Activated CD4-positive, alpha-beta memory T cell treated with anti-CD3 and anti-CD28 coated beads, Interleukin-2, amount 10 ng/mL, durations not matched to agents 7 days and 5 days (primary cell): ENCODE measurements at regions of chr1 and their contacts with region 1.

Region 1: GRCh38 chr1:165392634-165393571 is 36.4 kb upstream of the LMX1A start:
- DNase-seq: peak; percentile 95
- H3K4me3 Mint-ChIP-seq: peak overlapping the region; percentile 59
- H3K27ac Mint-ChIP-seq: peak overlapping the region; percentile 68
- H3K4me1 Mint-ChIP-seq: peaks cover 26% of the 10 kb centered on the region
- H3K27me3 Mint-ChIP-seq: peaks cover 87% of the 10 kb centered on the region

Region 2: GRCh38 chr1:165330483-165330882 is 62.4 kb before region 1 on chr1:
- CTCF ChIA-PET with region 1: no interaction called
- POLR2A ChIA-PET with region 1: no interaction called
- DNase-seq: no peak
- H3K4me3 Mint-ChIP-seq: no peak overlapping the region
- H3K27ac Mint-ChIP-seq: no peak overlapping the region
- H3K4me1 Mint-ChIP-seq: no peaks in the 10 kb centered on the region
- H3K27me3 Mint-ChIP-seq: peaks cover 14% of the 10 kb centered on the region

Region 3: DNA sequence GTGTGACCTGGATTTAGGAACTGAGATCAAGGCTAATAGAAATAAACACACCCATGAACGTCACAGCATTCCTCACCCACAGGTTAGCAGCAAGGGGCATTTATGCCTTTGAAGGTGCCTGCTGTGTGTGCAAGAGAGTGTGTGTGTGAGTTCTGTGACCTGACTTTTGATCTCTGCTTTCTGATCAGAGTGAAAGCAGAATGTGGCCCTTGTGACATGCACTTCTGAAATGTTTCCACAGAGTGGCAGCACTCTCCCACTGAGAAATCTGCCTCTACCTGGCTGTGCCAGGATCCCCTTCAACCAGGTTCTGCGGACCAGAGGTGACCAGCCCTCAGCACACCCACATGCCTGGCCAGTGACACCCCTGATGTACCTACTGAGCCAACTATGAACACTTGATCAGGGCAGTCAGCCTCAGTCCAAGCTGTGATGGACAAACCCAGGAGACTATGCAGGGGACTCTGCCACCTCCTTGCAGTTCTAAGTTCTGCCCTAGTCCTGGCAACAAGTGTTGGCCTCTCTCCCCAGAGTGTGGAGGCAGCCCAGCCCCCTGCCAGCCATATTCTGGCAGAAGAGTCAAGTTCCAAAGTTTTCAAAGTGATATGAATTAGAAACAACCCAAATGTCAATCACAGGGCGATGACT is 11.1 kb after region 1 on chr1:
- CTCF ChIA-PET with region 1: interaction called, 29 read pairs
- POLR2A ChIA-PET with region 1: no interaction called
- DNase-seq: peak; percentile 51
- H3K4me3 Mint-ChIP-seq: no peak overlapping the region
- H3K27ac Mint-ChIP-seq: no peak overlapping the region
- H3K4me1 Mint-ChIP-seq: no peaks in the 10 kb centered on the region
- H3K27me3 Mint-ChIP-seq: peaks cover 40% of the 10 kb centered on the region

Region 4: DNA sequence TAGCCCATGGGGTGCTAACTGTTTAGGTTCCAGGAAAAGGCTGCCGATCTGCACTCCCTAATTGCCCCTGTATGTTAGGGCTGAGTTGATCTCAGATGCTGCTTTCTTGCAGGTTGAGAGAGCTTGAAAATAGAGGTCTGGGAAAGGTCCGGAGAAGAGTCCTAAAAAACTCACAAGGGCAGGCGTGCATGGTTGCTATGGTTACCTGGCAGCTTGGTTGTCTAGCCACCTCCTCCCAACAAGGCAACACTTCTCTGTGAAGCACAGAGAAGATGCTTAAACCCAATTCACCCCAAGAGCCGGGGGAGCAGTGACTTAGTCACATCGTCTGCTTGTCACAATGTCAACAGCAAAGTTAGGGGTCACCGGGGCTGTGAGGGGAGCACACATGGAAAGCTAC is 119.9 kb after region 1 on chr1:
- CTCF ChIA-PET with region 1: no interaction called
- POLR2A ChIA-PET with region 1: no interaction called
- DNase-seq: no peak
- H3K4me3 Mint-ChIP-seq: no peak overlapping the region
- H3K27ac Mint-ChIP-seq: no peak overlapping the region
- H3K4me1 Mint-ChIP-seq: no peaks in the 10 kb centered on the region
- H3K27me3 Mint-ChIP-seq: peaks cover 23% of the 10 kb centered on the region

Region 5: DNA sequence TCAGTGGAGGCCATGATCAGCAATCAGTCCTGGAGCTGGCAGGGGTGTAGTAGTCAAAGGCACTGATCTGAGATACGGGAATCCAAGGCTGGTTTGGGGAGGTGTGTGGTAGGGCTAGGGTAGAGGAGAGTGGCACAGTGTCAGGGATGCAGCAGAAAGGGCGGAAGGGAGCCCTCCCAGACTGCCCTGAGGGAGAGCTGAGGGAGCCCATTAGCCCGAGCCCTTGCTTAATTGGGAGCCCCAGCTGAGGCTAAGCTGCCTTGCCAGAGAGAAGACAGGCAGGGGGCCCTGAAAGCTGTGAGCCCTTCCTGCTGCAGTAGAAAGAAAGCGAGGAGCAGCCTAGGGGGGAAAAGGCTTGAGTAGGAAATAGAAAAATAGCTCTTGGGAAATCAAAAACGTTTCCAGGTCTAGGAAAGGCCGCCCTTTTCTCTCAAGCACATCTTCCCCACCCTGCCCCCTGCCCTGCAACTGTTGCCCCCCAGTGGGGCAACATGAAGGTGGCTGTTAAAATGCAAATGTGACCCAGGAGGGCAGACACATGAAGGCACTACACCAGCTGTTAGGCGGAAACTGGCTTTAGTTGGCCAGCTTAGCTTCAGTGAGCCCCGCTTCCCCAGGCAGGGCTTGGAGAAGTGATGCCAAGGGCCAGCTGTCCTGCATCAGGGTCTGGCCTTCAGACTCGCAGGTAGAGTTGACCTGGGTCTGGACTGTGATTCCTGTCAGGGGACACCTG is 540.7 kb after region 1 on chr1:
- CTCF ChIA-PET with region 1: no interaction called
- POLR2A ChIA-PET with region 1: no interaction called
- DNase-seq: no peak
- H3K4me3 Mint-ChIP-seq: no peak overlapping the region
- H3K27ac Mint-ChIP-seq: no peak overlapping the region
- H3K4me1 Mint-ChIP-seq: no peaks in the 10 kb centered on the region
- H3K27me3 Mint-ChIP-seq: peaks cover 2% of the 10 kb centered on the region